Ascending aorta (tissue), 2 donors: ENCODE measurements at regions of chr21 and their contacts with region 1.

Region 1: GRCh38 chr21:45019076-45019956 is 55.1 kb upstream of the ADARB1 start:
- DNase-seq: peak; percentile 22 to 90
- H3K4me3 ChIP-seq: peak overlapping the region; percentile 44 to 63
- H3K27ac ChIP-seq: peak overlapping the region; percentile 93 to 95
- H3K4me1 ChIP-seq: peaks cover 8 to 31% of the 10 kb centered on the region in 2 donors
- H3K27me3 ChIP-seq: no peaks in the 10 kb centered on the region
- CTCF ChIP-seq: no peak

Region 2: DNA sequence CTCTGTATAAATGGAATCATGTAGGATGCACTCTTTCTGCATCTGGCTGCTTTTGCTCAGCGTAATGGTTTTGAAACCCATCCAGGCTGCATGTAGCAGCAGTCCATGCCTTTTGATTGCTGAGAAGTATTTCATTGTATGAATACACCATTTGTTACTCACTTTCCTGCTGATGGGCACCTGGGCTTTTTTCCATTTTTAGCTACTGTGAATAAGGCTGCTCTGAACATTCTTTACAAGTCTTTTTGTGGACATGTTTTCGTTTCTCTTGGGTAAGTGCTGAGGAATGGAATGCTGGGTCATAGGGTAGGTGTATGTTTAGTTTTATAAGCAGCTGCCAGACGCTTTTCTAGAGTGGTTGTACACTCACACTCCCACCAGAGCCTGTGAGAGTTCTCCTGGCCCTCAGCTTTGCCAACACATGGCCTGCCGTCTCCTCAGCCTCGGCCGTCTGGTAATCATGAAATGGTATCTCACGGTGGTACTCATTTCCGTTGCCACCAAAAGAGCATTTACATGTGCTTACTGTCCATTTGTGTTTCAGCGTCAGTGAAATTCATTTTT is 56.8 kb before region 1 on chr21:
- intact Hi-C with region 1: loop called (anchors 5 kb)
- DNase-seq: peak in 1 of 2 donors; percentile 91
- H3K4me3 ChIP-seq: no peak overlapping the region
- H3K27ac ChIP-seq: peak overlapping the region; percentile 84 to 90
- H3K4me1 ChIP-seq: peaks cover 38 to 74% of the 10 kb centered on the region in 2 donors
- H3K27me3 ChIP-seq: no peaks in the 10 kb centered on the region
- CTCF ChIP-seq: no peak